OCI-LY7 (cell line): ENCODE measurements at regions of chr16 and their contacts with region 1.

Region 1: GRCh38 chr16:58582971-58583765 is 46.5 kb downstream of the CNOT1 start:
- DNase-seq: no peak
- H3K4me3 ChIP-seq: no peak overlapping the region
- H3K27ac ChIP-seq: no peak overlapping the region
- H3K4me1 ChIP-seq: no peaks in the 10 kb centered on the region
- CTCF ChIP-seq: no peak

Region 2: GRCh38 chr16:58533751-58534470 is 49.3 kb before region 1 on chr16:
- CTCF ChIA-PET with region 1: no interaction called
- POLR2A ChIA-PET with region 1: interaction called, 4 read pairs
- intact Hi-C with region 1: loop called (anchors 2 kb)
- DNase-seq: no peak
- H3K4me3 ChIP-seq: no peak overlapping the region
- H3K27ac ChIP-seq: no peak overlapping the region
- H3K4me1 ChIP-seq: no peaks in the 10 kb centered on the region
- CTCF ChIP-seq: no peak

Region 3: GRCh38 chr16:58541711-58542110 is 41.5 kb before region 1 on chr16:
- CTCF ChIA-PET with region 1: no interaction called
- POLR2A ChIA-PET with region 1: interaction called, 5 read pairs
- intact Hi-C with region 1: loop called (anchors 5 kb)
- DNase-seq: no peak
- H3K4me3 ChIP-seq: no peak overlapping the region
- H3K27ac ChIP-seq: no peak overlapping the region
- H3K4me1 ChIP-seq: no peaks in the 10 kb centered on the region
- CTCF ChIP-seq: no peak